CD8-positive, alpha-beta T cell (primary cell): ENCODE measurements at regions of chr18 and their contacts with region 1.

Region 1: GRCh38 chr18:67217551-67218166 is 298.9 kb downstream of the DSEL start:
- DNase-seq: peak; percentile 6 to 76 (median 56)
- ATAC-seq: peak; percentile 93
- H3K4me3 ChIP-seq: no peak overlapping the region
- H3K4me3 Mint-ChIP-seq: no peak overlapping the region
- H3K27ac ChIP-seq: no peak overlapping the region
- H3K27ac Mint-ChIP-seq: no peak overlapping the region
- H3K4me1 ChIP-seq: no peaks in the 10 kb centered on the region
- H3K4me1 Mint-ChIP-seq: no peaks in the 10 kb centered on the region
- H3K27me3 ChIP-seq: no peaks in the 10 kb centered on the region
- H3K27me3 Mint-ChIP-seq: no peaks in the 10 kb centered on the region
- CTCF ChIP-seq: peak; percentile 88

Region 2: DNA sequence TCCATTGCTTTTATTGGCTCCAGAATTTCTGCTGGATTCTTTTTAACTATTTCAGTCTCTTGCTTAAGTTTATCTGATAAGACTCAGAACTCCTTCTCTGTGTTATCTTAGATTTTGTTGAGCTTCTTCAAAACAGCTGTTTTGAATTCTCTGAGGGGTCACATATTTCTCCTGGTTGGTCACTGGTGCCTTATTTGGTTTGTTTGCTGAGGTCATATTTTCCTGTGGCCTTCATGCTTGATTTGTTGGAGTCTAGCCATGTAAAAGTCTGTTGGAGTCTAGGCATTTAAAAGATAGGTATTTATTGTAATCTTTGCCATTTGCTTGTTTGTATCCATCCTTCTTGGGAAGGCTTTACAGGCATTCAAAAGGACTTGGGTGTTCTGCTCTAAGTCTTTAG is 99.9 kb before region 1 on chr18:
- CTCF ChIA-PET with region 1: no interaction called
- POLR2A ChIA-PET with region 1: no interaction called
- intact Hi-C with region 1: no loop called
- DNase-seq: no peak
- ATAC-seq: no peak
- H3K4me3 ChIP-seq: no peak overlapping the region
- H3K4me3 Mint-ChIP-seq: no peak overlapping the region
- H3K27ac ChIP-seq: no peak overlapping the region
- H3K27ac Mint-ChIP-seq: no peak overlapping the region
- H3K4me1 ChIP-seq: no peaks in the 10 kb centered on the region
- H3K4me1 Mint-ChIP-seq: no peaks in the 10 kb centered on the region
- H3K27me3 ChIP-seq: no peaks in the 10 kb centered on the region
- H3K27me3 Mint-ChIP-seq: no peaks in the 10 kb centered on the region
- CTCF ChIP-seq: no peak

Region 3: DNA sequence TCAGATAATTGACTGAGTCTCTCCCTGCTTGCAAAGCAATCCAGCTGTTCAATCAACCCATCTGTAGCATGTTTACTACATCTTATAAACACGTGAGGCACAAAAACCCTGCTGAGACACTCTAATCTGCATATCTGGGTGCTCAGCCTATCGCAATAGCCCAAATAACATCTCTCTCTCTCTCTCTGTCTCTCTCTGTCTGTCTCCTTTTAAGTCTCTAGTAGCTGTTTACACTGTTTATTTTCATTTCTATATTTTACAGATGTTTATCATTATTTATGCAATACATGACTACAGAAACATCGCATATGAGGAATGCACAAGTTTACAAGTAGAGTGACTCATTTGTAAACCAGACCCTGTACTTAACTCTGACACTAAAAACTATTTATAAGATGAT is 721.0 kb after region 1 on chr18:
- CTCF ChIA-PET with region 1: no interaction called
- POLR2A ChIA-PET with region 1: no interaction called
- intact Hi-C with region 1: no loop called
- DNase-seq: no peak
- ATAC-seq: no peak
- H3K4me3 ChIP-seq: no peak overlapping the region
- H3K4me3 Mint-ChIP-seq: no peak overlapping the region
- H3K27ac ChIP-seq: no peak overlapping the region
- H3K27ac Mint-ChIP-seq: no peak overlapping the region
- H3K4me1 ChIP-seq: no peaks in the 10 kb centered on the region
- H3K4me1 Mint-ChIP-seq: no peaks in the 10 kb centered on the region
- H3K27me3 ChIP-seq: no peaks in the 10 kb centered on the region
- H3K27me3 Mint-ChIP-seq: no peaks in the 10 kb centered on the region
- CTCF ChIP-seq: no peak

Region 4: GRCh38 chr18:68623342-68623741 is 1405.7 kb after region 1 on chr18:
- CTCF ChIA-PET with region 1: no interaction called
- POLR2A ChIA-PET with region 1: no interaction called
- intact Hi-C with region 1: loop called (anchors 1 to 2 kb)
- DNase-seq: peak in 4 of 9 experiments; percentile 19 to 50 (median 41)
- ATAC-seq: no peak
- H3K4me3 ChIP-seq: no peak overlapping the region
- H3K4me3 Mint-ChIP-seq: no peak overlapping the region
- H3K27ac ChIP-seq: no peak overlapping the region
- H3K27ac Mint-ChIP-seq: no peak overlapping the region
- H3K4me1 ChIP-seq: no peaks in the 10 kb centered on the region
- H3K4me1 Mint-ChIP-seq: no peaks in the 10 kb centered on the region
- H3K27me3 ChIP-seq: no peaks in the 10 kb centered on the region
- H3K27me3 Mint-ChIP-seq: peaks cover 8% of the 10 kb centered on the region
- CTCF ChIP-seq: peak; percentile 20

Region 5: DNA sequence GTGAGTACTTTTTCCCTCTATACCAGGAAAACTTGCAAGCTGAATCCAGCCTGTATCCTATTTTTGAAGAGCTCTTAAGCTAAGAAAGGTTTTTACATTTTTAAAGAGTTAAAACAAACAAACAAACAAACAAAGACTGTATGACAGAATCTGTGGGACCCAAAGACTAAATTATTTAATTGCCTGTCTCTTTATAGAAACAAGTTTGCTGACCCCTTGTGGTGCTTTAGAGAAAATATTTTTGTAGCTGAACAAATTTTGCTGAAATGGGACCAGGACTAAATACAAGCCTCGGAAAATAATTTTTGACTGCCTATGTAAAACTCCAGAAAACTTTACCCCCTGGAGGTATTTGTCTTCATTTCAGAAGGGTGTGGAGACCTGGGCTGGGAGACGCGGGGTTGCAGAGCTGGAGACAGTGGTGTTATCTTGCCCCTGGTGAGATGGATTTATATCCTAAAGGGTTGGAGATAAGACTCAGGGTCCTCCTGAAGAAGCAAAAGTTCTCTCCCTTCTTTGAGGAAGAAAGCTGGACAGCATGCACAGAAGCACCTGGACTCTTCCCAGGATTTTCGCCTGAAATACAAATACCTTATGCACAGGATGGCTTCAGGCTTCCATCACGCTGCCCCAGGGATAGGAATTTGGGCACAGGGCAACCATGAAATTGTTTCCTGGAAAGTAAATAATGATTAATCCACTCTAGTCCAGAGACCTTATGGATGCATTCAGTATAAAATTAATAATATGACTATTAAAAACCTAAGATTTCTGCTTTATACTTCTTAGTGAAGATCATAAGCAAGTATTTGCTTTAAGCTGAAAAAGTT is 1442.9 kb after region 1 on chr18:
- CTCF ChIA-PET with region 1: interaction called, 24 read pairs
- POLR2A ChIA-PET with region 1: no interaction called
- intact Hi-C with region 1: loop called (anchors 1 kb)
- DNase-seq: peak in 2 of 9 experiments; percentile 39 to 52
- ATAC-seq: no peak
- H3K4me3 ChIP-seq: no peak overlapping the region
- H3K4me3 Mint-ChIP-seq: no peak overlapping the region
- H3K27ac ChIP-seq: no peak overlapping the region
- H3K27ac Mint-ChIP-seq: no peak overlapping the region
- H3K4me1 ChIP-seq: no peaks in the 10 kb centered on the region
- H3K4me1 Mint-ChIP-seq: no peaks in the 10 kb centered on the region
- H3K27me3 ChIP-seq: no peaks in the 10 kb centered on the region
- H3K27me3 Mint-ChIP-seq: peaks cover 2% of the 10 kb centered on the region
- CTCF ChIP-seq: peak; percentile 64

Region 6: GRCh38 chr18:68735483-68736343 is 1518.1 kb after region 1 on chr18:
- CTCF ChIA-PET with region 1: no interaction called
- POLR2A ChIA-PET with region 1: no interaction called
- intact Hi-C with region 1: loop called in 1 of 2 experiments (anchors 1 kb)
- DNase-seq: peak in 2 of 9 experiments; percentile 43 to 58
- ATAC-seq: peak; percentile 62
- H3K4me3 ChIP-seq: no peak overlapping the region
- H3K4me3 Mint-ChIP-seq: no peak overlapping the region
- H3K27ac ChIP-seq: no peak overlapping the region
- H3K27ac Mint-ChIP-seq: no peak overlapping the region
- H3K4me1 ChIP-seq: no peaks in the 10 kb centered on the region
- H3K4me1 Mint-ChIP-seq: peaks cover 2% of the 10 kb centered on the region
- H3K27me3 ChIP-seq: no peaks in the 10 kb centered on the region
- H3K27me3 Mint-ChIP-seq: no peaks in the 10 kb centered on the region
- CTCF ChIP-seq: peak; percentile 62